CD4-positive, alpha-beta T cell (primary cell): ENCODE measurements at regions of chr1 and their contacts with region 1.

Region 1: GRCh38 chr1:64877151-64877550 is 89.2 kb downstream of the JAK1 start:
- DNase-seq: peak in 10 of 14 experiments; percentile 15 to 90 (median 36)
- ATAC-seq: peak; percentile 93
- H3K4me3 ChIP-seq: no peak overlapping the region
- H3K4me3 Mint-ChIP-seq: peak overlapping the region; percentile 68
- H3K27ac ChIP-seq: peak overlapping the region in 1 of 2 donors; percentile 53
- H3K27ac Mint-ChIP-seq: peak overlapping the region; percentile 82
- H3K4me1 ChIP-seq: peaks cover 33% of the 10 kb centered on the region
- H3K4me1 Mint-ChIP-seq: peaks cover 84% of the 10 kb centered on the region
- H3K27me3 ChIP-seq: no peaks in the 10 kb centered on the region
- H3K27me3 Mint-ChIP-seq: no peaks in the 10 kb centered on the region
- CTCF ChIP-seq: no peak

Region 2: GRCh38 chr1:64798872-64799271 is 78.3 kb before region 1 on chr1:
- CTCF ChIA-PET with region 1: no interaction called
- POLR2A ChIA-PET with region 1: no interaction called
- intact Hi-C with region 1: no loop called
- DNase-seq: no peak
- ATAC-seq: no peak
- H3K4me3 ChIP-seq: no peak overlapping the region
- H3K4me3 Mint-ChIP-seq: no peak overlapping the region
- H3K27ac ChIP-seq: no peak overlapping the region
- H3K27ac Mint-ChIP-seq: no peak overlapping the region
- H3K4me1 ChIP-seq: no peaks in the 10 kb centered on the region
- H3K4me1 Mint-ChIP-seq: no peaks in the 10 kb centered on the region
- H3K27me3 ChIP-seq: no peaks in the 10 kb centered on the region
- H3K27me3 Mint-ChIP-seq: no peaks in the 10 kb centered on the region
- CTCF ChIP-seq: no peak

Region 3: GRCh38 chr1:64956733-64957441 is 79.7 kb after region 1 on chr1:
- CTCF ChIA-PET with region 1: no interaction called
- POLR2A ChIA-PET with region 1: interaction called, 37 read pairs
- intact Hi-C with region 1: no loop called
- DNase-seq: peak in 4 of 14 experiments; percentile 26 to 47 (median 42)
- ATAC-seq: peak; percentile 31
- H3K4me3 ChIP-seq: peak overlapping the region; percentile 8
- H3K4me3 Mint-ChIP-seq: no peak overlapping the region
- H3K27ac ChIP-seq: peak overlapping the region; percentile 1 to 10
- H3K27ac Mint-ChIP-seq: no peak overlapping the region
- H3K4me1 ChIP-seq: peaks cover 67% of the 10 kb centered on the region
- H3K4me1 Mint-ChIP-seq: peaks cover 58% of the 10 kb centered on the region
- H3K27me3 ChIP-seq: no peaks in the 10 kb centered on the region
- H3K27me3 Mint-ChIP-seq: no peaks in the 10 kb centered on the region
- CTCF ChIP-seq: no peak

Region 4: GRCh38 chr1:65002508-65003315 is 125.6 kb after region 1 on chr1:
- CTCF ChIA-PET with region 1: interaction called, 4 read pairs
- POLR2A ChIA-PET with region 1: interaction called, 9 read pairs
- intact Hi-C with region 1: loop called in 1 of 2 experiments (anchors 5 kb)
- DNase-seq: peak; percentile 47 to 92 (median 64)
- ATAC-seq: peak; percentile 89
- H3K4me3 ChIP-seq: peak overlapping the region; percentile 67
- H3K4me3 Mint-ChIP-seq: peak overlapping the region; percentile 74
- H3K27ac ChIP-seq: no peak overlapping the region
- H3K27ac Mint-ChIP-seq: peak overlapping the region; percentile 86
- H3K4me1 ChIP-seq: peaks cover 23% of the 10 kb centered on the region
- H3K4me1 Mint-ChIP-seq: peaks cover 27% of the 10 kb centered on the region
- H3K27me3 ChIP-seq: no peaks in the 10 kb centered on the region
- H3K27me3 Mint-ChIP-seq: no peaks in the 10 kb centered on the region
- CTCF ChIP-seq: no peak